Heart left ventricle (tissue), 16 donors: ENCODE measurements at regions of chr10 and their contacts with region 1.

Region 1: GRCh38 chr10:3869036-3869435 is 84.0 kb upstream of the KLF6 start:
- DNase-seq: no peak
- ATAC-seq: no peak
- H3K4me3 ChIP-seq: no peak overlapping the region
- H3K27ac ChIP-seq: no peak overlapping the region
- H3K4me1 ChIP-seq: peaks cover 0 to 45% (median 3%) of the 10 kb centered on the region in 12 donors
- H3K27me3 ChIP-seq: no peaks in the 10 kb centered on the region
- CTCF ChIP-seq: no peak
- POLR2A ChIP-seq: no peak

Region 2: DNA sequence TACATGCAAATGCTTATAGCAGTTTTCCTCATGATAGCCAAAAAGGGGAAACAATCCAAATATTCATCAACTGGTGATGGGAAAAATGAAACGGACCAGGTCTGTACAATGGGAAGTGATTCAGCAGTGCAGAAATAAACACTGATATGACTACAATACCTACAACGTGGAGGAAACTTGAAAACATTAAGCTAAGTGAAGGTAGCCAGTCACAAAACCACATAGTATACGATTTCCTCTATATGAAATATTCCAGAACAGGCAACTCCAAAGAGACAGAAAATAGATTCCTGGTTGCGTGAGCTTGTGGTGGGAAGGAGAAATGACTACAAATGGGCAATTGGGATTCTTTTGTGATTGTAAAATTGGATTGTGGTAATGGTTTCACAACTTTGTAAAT is 433.4 kb before region 1 on chr10:
- intact Hi-C with region 1: no loop called
- DNase-seq: no peak
- ATAC-seq: peak in 1 of 4 donors; percentile 49
- H3K4me3 ChIP-seq: no peak overlapping the region
- H3K27ac ChIP-seq: peak overlapping the region in 1 of 12 donors; percentile 32
- H3K4me1 ChIP-seq: peaks cover 0 to 5% (median 0%) of the 10 kb centered on the region in 12 donors
- H3K27me3 ChIP-seq: no peaks in the 10 kb centered on the region
- CTCF ChIP-seq: no peak
- POLR2A ChIP-seq: no peak

Region 3: DNA sequence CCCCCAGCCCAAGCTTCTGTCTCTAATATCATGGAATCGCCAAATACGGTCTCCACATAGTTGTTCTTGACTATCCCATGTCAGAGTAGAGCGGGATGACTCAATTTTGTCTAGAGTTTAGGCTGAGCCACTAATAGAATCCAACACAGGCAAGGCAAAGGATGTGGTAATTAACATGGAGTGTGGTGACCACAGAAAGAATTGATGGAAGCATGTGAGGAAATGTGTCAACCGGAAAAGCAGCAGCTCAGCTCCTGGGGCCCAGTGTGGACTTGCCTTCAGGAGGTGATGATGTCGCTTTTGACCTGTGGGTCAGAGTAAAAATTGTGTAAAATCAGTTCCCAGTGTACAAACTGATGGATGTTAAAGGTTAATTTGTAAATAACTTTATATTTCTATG is 55.3 kb after region 1 on chr10:
- intact Hi-C with region 1: loop called in 1 of 10 experiments (anchors 10 kb)
- DNase-seq: no peak
- ATAC-seq: peak in 3 of 4 donors; percentile 36 to 75 (median 41)
- H3K4me3 ChIP-seq: no peak overlapping the region
- H3K27ac ChIP-seq: peak overlapping the region in 2 of 12 donors; percentile 33 to 44
- H3K4me1 ChIP-seq: peaks cover 0 to 38% (median 11%) of the 10 kb centered on the region in 12 donors
- H3K27me3 ChIP-seq: no peaks in the 10 kb centered on the region
- CTCF ChIP-seq: no peak
- POLR2A ChIP-seq: no peak

Region 4: GRCh38 chr10:4101918-4102654 is 233.1 kb after region 1 on chr10:
- intact Hi-C with region 1: no loop called
- DNase-seq: peak in 2 of 5 donors; percentile 33 to 45
- ATAC-seq: peak in 3 of 4 donors; percentile 78 to 98 (median 95)
- H3K4me3 ChIP-seq: no peak overlapping the region
- H3K27ac ChIP-seq: peak overlapping the region in 1 of 12 donors; percentile 3
- H3K4me1 ChIP-seq: peaks cover 0 to 9% (median 0%) of the 10 kb centered on the region in 12 donors
- H3K27me3 ChIP-seq: no peaks in the 10 kb centered on the region
- CTCF ChIP-seq: no peak
- POLR2A ChIP-seq: no peak